ENCODE measurements at regions of chr11 and their contacts with region 1.

Region 1: GRCh38 chr11:123560006-123560405 is 94.4 kb downstream of the SCN3B start:
- DNase-seq: no peak
- ATAC-seq: peak; percentile 31
- H3K4me3 Mint-ChIP-seq: peak overlapping the region; percentile 55
- H3K27ac Mint-ChIP-seq: peak overlapping the region; percentile 82; the same call in 1 of the 2 replicates
- H3K4me1 Mint-ChIP-seq: peaks cover 42% of the 10 kb centered on the region
- H3K27me3 Mint-ChIP-seq: no peaks in the 10 kb centered on the region
- CTCF ChIP-seq: no peak

Region 2: GRCh38 chr11:123487157-123487780 is 72.7 kb before region 1 on chr11:
- CTCF ChIA-PET with region 1: interaction called, 13 read pairs
- POLR2A ChIA-PET with region 1: no interaction called
- DNase-seq: no peak
- ATAC-seq: no peak
- H3K4me3 Mint-ChIP-seq: no peak overlapping the region
- H3K27ac Mint-ChIP-seq: no peak overlapping the region
- H3K4me1 Mint-ChIP-seq: peaks cover under 1% of the 10 kb centered on the region
- H3K27me3 Mint-ChIP-seq: no peaks in the 10 kb centered on the region
- CTCF ChIP-seq: no peak

Region 3: DNA sequence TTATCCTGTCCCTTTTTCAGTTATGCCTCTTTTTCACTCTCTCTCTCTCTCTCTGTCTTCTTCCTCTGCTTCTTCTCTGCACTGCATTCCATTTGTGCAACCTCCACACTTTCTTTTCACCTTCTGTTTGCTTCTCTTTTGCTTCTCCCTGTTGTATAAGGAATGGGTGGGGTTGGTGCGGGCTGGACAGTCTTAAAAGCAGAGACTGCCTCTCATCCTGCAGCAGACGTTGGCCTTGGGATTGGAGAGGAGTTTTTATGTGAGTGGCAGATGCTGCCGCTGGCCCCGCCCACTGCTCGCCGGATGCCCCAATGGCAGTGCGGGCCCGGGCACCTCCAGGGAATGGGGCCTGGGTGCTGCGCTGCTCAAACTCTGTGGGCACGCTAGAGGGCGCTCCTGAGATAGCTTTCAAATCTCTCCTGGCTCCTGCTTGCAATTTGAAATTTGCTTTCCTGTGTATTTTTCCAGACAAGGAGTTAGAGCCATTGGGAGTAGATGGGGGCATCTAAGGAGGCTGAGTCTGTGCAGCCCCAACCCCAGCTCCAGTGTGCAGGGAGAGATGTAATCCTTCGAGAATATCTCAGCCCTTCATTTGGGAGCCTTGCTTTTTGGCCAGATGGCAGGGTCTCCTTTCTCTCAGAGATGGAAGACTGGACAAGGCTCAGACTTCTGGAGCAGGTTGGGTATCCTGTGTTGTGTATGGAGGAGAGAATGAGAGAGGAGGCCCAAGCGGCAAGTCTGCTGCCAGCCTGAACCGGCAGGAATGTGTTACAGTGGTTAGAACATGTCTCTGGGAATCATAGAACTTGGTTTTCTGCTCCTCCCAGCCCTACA is 48.8 kb before region 1 on chr11:
- CTCF ChIA-PET with region 1: interaction called, 37 read pairs
- POLR2A ChIA-PET with region 1: no interaction called
- DNase-seq: peak; percentile 95
- ATAC-seq: peak; percentile 93
- H3K4me3 Mint-ChIP-seq: peak overlapping the region; percentile 1; the same call in 1 of the 2 replicates
- H3K27ac Mint-ChIP-seq: peak overlapping the region; percentile 63
- H3K4me1 Mint-ChIP-seq: peaks cover 41% of the 10 kb centered on the region
- H3K27me3 Mint-ChIP-seq: no peaks in the 10 kb centered on the region
- CTCF ChIP-seq: peak; percentile 88

Region 4: GRCh38 chr11:123525511-123525918 is 34.5 kb before region 1 on chr11:
- CTCF ChIA-PET with region 1: interaction called, 27 read pairs
- POLR2A ChIA-PET with region 1: no interaction called
- DNase-seq: no peak
- ATAC-seq: peak; percentile 74
- H3K4me3 Mint-ChIP-seq: no peak overlapping the region
- H3K27ac Mint-ChIP-seq: no peak overlapping the region
- H3K4me1 Mint-ChIP-seq: peaks cover 56% of the 10 kb centered on the region
- H3K27me3 Mint-ChIP-seq: no peaks in the 10 kb centered on the region
- CTCF ChIP-seq: no peak

Region 5: DNA sequence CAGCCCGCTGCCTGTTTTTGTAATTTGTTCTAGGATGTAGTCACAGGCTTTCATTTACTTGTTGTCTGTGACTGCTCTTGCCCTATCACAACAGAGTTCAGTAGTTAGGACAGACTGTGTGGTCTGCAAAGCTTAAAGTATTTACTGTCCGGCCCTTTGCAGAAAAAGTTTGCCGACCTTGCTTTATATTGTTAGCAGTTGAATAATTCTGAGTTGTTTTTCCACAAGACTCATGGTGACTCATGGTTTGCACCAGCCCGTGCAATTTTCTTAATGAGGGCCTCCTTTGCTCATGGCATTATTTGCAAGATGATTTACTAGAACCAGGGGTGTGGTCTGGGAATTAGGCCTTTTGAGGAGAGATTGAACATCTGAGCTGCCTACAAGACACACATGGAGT is 16.2 kb before region 1 on chr11:
- CTCF ChIA-PET with region 1: interaction called, 40 read pairs
- POLR2A ChIA-PET with region 1: no interaction called
- DNase-seq: no peak
- ATAC-seq: no peak
- H3K4me3 Mint-ChIP-seq: no peak overlapping the region
- H3K27ac Mint-ChIP-seq: no peak overlapping the region
- H3K4me1 Mint-ChIP-seq: peaks cover 30% of the 10 kb centered on the region
- H3K27me3 Mint-ChIP-seq: no peaks in the 10 kb centered on the region
- CTCF ChIP-seq: no peak